GM12878 (cell line): ENCODE measurements at regions of chr2 and their contacts with region 1.

Region 1: GRCh38 chr2:202265467-202266277 is at the start of gene NOP58:
- DNase-seq: peak; percentile 84
- ATAC-seq: peak; percentile 82
- H3K4me3 ChIP-seq: peak within 1 kb of the TSS; percentile 89
- H3K27ac ChIP-seq: peak within 1 kb of the TSS; percentile 99
- H3K4me1 ChIP-seq: peaks cover 8% of the 10 kb centered on the region; the same call in 1 of the 2 replicates
- H3K27me3 ChIP-seq: no peaks in the 10 kb centered on the region
- CTCF ChIP-seq: no peak
- EP300 ChIP-seq: no peak
- POLR2A ChIP-seq: peak; percentile 99
- RAD21 ChIP-seq: no peak
- polyA plus RNA-seq, gene NOP58: 317 to 327 TPM

Region 2: DNA sequence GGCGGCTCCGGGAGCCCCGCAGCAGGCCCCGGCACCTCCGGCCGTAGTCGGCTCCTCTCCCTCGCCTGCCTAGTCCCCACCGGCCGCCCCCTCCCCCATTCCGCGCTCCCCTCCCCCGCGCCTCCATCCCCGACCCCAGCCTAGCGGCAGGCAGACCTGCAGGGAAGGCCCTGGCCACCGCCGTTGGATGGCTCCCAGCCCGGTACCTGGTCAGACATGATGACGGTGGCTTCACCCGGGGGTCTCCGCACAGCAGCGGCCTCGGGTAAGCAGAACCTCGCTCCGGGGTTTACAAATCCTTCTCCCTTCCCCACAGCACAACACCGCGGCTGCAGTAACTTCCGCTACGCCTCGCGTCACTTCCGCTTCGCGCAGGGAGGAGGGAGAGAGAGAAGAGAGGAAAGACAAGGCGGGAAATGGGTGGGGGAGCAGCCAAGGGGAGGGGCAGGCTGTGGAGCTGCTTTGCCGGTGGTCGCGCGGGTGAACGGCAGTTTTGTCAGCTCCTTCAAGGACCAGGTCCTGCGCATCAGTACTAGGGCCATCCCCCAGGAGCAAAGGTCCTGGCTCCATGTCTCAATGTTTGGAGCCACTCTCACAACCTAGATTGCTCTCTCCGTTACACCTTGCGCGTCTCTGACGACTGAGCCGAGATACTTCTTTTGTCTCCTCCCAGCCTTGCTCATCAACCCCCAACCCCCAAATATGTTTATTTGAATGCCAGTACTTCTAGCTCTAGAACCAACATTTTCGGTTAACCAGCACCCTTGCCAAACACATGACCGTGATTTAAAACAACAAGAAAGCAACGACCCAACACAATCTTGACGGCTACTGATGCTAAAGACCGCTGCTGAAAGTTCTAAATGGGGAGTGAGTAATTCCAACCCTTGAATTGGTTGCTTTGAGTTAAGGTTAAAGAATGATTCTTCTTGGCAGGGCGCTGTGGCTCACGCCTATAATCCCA is 27.2 kb before region 1 on chr2 and contains the start of gene SUMO1:
- CTCF ChIA-PET with region 1: interaction called, 3 read pairs
- POLR2A ChIA-PET with region 1: interaction called, 4 read pairs
- RAD21 ChIA-PET with region 1: interaction called, 3 read pairs
- SMC1A ChIA-PET with region 1: interaction called, 6 read pairs
- in situ Hi-C with region 1: no loop called
- intact Hi-C with region 1: loop called (anchors 5 kb)
- DNase-seq: peak; percentile 72
- ATAC-seq: peak; percentile 95
- H3K4me3 ChIP-seq: peak within 1 kb of the TSS; percentile 91
- H3K27ac ChIP-seq: peak within 1 kb of the TSS; percentile 72
- H3K4me1 ChIP-seq: no peaks in the 10 kb centered on the region
- H3K27me3 ChIP-seq: no peaks in the 10 kb centered on the region
- CTCF ChIP-seq: no peak
- EP300 ChIP-seq: no peak
- POLR2A ChIP-seq: peak; percentile 93
- RAD21 ChIP-seq: no peak
- polyA plus RNA-seq, gene SUMO1: 351 to 458 TPM

Region 3: GRCh38 chr2:202278944-202279343 is 13.3 kb after region 1 on chr2:
- CTCF ChIA-PET with region 1: interaction called, 26 read pairs
- POLR2A ChIA-PET with region 1: interaction called, 11 read pairs
- RAD21 ChIA-PET with region 1: interaction called, 9 read pairs
- SMC1A ChIA-PET with region 1: interaction called, 13 read pairs
- in situ Hi-C with region 1: no loop called
- intact Hi-C with region 1: no loop called
- DNase-seq: no peak
- ATAC-seq: peak; percentile 41
- H3K4me3 ChIP-seq: no peak overlapping the region
- H3K27ac ChIP-seq: no peak overlapping the region; the same call in 1 of the 2 replicates
- H3K4me1 ChIP-seq: 0 out of 2 replicates have a peak, but pooled peaks cover 4% of the 10 kb centered on the region
- H3K27me3 ChIP-seq: no peaks in the 10 kb centered on the region
- CTCF ChIP-seq: peak; percentile 30 to 39 (median 35); a peak in 3 of 6 replicates
- EP300 ChIP-seq: no peak
- POLR2A ChIP-seq: no peak
- RAD21 ChIP-seq: peak; percentile 36; the same call in 1 of the 2 replicates

Region 4: GRCh38 chr2:202322435-202322834 is 56.8 kb after region 1 on chr2:
- CTCF ChIA-PET with region 1: no interaction called
- POLR2A ChIA-PET with region 1: no interaction called
- RAD21 ChIA-PET with region 1: no interaction called
- SMC1A ChIA-PET with region 1: no interaction called
- in situ Hi-C with region 1: no loop called
- intact Hi-C with region 1: no loop called
- DNase-seq: no peak
- ATAC-seq: no peak
- H3K4me3 ChIP-seq: no peak overlapping the region
- H3K27ac ChIP-seq: no peak overlapping the region
- H3K4me1 ChIP-seq: no peaks in the 10 kb centered on the region
- H3K27me3 ChIP-seq: no peaks in the 10 kb centered on the region
- CTCF ChIP-seq: no peak
- EP300 ChIP-seq: no peak
- POLR2A ChIP-seq: no peak
- RAD21 ChIP-seq: no peak

Region 5: GRCh38 chr2:202375609-202376408 is 110.1 kb after region 1 on chr2 and contains the start of gene BMPR2:
- CTCF ChIA-PET with region 1: no interaction called
- POLR2A ChIA-PET with region 1: interaction called, 8 read pairs
- RAD21 ChIA-PET with region 1: interaction called, 4 read pairs
- SMC1A ChIA-PET with region 1: interaction called, 5 read pairs
- in situ Hi-C with region 1: no loop called
- intact Hi-C with region 1: loop called (anchors 5 kb)
- DNase-seq: no peak
- ATAC-seq: peak; percentile 76
- H3K4me3 ChIP-seq: peak within 1 kb of the TSS; percentile 76
- H3K27ac ChIP-seq: peak within 1 kb of the TSS; percentile 75
- H3K4me1 ChIP-seq: peaks cover 5% of the 10 kb centered on the region; the same call in 1 of the 2 replicates
- H3K27me3 ChIP-seq: no peaks in the 10 kb centered on the region
- CTCF ChIP-seq: no peak
- EP300 ChIP-seq: no peak
- POLR2A ChIP-seq: peak; percentile 91
- RAD21 ChIP-seq: no peak
- polyA plus RNA-seq, gene BMPR2: 2.4 to 3.4 TPM